ENCODE measurements at regions of chr7 and their contacts with region 1.

Region 1: DNA sequence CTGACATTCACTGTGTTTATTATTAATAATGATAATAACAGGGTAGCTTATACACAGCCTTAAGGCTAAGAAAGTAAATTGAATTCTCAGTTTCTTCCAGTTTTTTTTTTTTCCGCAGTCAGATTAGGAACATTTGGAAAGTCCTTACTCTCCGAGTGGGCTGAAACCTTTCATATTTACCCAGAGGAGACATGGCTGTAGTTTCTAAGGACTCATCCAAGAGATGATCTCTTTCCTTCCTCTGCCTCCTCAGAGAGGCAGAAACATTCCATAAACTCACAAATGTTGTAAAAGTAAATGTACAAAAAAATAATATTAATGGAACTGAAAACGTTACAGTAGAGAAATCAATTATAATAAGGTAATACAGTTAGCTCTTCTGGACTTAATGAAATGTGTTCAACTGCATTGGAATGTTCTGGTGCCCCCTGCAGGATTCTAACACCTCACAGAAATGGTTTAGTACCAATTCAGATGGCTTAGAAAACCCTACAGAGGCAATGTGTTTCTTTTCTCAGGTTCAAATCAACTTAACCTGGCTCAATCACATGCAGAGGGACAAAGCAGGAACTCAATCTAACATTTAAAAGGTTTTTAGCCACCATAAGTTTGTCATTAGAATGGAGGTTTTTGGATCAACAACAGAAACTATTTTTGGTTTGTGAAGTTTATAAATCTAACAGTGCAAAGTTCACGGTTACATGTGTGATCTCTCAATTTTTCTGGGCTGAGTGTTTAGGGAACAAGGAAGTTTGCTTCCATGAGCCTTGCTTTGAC is 71.7 kb downstream of the ICA1 start:
- DNase-seq: peak; percentile 79
- ATAC-seq: peak; percentile 88
- H3K4me3 Mint-ChIP-seq: no peak overlapping the region
- H3K27ac Mint-ChIP-seq: no peak overlapping the region
- H3K4me1 Mint-ChIP-seq: peaks cover 31% of the 10 kb centered on the region
- H3K27me3 Mint-ChIP-seq: peaks cover 14% of the 10 kb centered on the region

Region 2: DNA sequence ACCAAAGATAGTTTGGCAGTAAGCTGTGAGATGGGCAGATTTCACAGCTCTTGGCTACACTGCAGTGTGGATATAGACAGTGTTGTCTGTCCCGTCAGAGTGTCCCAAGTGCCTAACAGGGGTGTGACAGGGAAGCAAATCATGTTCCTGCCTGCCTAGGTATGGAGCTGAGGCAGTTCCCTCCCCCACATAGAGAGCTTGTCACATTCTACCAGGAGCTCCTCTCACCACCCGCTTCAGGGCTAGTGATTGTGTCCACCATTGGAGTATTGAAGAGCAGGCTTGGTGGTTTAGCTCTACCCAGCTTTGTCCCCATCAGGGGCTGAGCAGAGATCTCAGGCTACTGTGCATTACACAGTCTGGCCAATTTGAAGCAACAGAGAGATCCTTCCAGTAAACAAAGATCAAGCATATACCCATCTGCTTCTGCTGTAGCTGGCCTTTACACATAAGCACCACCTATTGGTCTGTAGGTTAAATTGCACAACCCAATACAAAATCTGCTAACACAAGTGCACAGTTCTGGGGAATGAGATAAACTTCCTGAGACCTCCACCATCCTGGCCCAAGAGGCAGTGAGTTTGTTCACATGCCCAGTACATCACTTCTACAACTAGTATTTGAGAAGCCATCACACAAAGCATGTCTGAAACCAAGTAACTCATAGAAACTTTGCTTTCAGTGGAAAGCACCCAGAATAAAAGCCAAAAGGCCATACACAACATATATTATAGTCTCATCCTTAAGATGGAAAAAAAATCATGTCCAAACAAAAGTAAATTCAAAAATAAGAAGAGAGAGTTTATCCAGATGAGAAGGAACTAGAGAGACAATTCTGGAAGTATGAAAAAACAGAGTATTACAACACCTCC is 154.4 kb before region 1 on chr7:
- CTCF ChIA-PET with region 1: interaction called, 11 read pairs
- POLR2A ChIA-PET with region 1: no interaction called
- DNase-seq: no peak
- ATAC-seq: peak; percentile 82
- H3K4me3 Mint-ChIP-seq: no peak overlapping the region
- H3K27ac Mint-ChIP-seq: no peak overlapping the region
- H3K4me1 Mint-ChIP-seq: peaks cover 6% of the 10 kb centered on the region
- H3K27me3 Mint-ChIP-seq: no peaks in the 10 kb centered on the region

Region 3: DNA sequence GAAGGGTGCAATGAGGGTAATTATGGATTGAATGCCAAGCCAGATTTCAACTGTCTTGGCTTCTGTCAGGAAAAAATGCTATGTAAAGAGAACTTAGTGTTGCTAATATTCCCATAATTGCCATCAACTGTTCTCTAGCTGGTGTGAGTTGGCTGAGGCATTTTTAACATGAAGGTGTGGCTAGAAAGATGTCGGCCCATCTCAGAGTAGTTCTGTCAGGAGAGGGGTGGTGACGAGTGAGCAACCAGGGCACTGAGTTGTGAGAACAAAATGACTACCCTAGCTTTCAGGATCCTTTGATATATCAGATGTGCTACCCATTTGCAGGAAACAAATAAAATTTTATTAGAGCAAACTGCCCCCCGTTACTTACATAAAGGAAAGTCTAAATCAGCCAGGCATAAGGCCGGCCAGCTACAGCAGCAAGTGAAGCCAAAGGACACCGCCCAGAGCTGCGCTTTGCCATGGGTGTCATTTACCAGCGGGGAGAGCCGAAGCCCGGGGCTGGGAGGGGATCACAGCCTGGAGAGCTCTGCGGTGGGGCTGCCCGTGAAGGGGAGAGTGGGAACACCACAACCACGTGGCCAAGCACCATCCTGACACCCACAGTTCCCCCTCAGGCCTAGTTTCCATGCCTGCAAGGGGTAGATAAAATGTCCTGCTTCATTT is 69.8 kb before region 1 on chr7:
- CTCF ChIA-PET with region 1: interaction called, 20 read pairs
- POLR2A ChIA-PET with region 1: interaction called, 8 read pairs
- DNase-seq: no peak
- ATAC-seq: no peak
- H3K4me3 Mint-ChIP-seq: no peak overlapping the region
- H3K27ac Mint-ChIP-seq: no peak overlapping the region
- H3K4me1 Mint-ChIP-seq: peaks cover 63% of the 10 kb centered on the region
- H3K27me3 Mint-ChIP-seq: peaks cover 2% of the 10 kb centered on the region

Region 4: DNA sequence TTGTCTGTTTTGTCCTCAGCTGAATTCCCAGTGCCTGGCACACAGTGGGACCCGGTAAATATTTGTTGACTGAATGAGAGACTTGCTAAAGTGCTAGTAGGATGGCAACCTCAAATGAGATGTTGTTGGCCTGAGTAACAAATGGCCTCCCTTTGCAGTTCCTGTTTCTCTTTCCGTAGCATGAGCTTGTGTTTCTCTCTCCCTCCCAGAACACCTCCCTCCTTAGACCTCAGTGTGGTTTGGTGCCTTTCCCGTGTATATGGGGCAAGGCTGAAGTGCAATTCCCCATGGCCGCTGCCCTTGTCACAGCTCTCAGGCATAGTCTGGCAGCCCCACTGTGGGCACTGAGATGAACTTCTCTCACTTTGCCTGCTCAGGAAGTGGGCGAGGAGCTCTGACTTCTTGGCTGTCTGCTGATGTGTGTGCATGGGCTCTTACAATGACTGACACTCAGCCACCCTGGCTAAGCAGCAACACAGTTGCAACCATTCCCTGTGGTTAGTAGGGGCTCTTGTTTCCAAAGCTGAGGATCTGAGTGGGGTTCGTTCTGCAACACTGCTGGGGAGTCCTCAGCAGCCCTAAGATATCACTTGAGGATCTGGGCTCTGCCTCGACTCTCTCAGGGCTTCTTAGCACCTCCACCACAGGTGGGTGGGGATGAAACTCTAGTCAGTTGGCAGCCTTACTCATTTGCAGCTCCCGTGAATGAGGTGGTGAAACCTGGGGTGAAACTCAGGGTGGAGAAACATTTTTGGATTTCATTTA is 64.4 kb before region 1 on chr7:
- CTCF ChIA-PET with region 1: interaction called, 20 read pairs
- POLR2A ChIA-PET with region 1: interaction called, 8 read pairs
- DNase-seq: peak; percentile 85
- ATAC-seq: peak; percentile 96
- H3K4me3 Mint-ChIP-seq: peak overlapping the region; percentile 57
- H3K27ac Mint-ChIP-seq: peak overlapping the region; percentile 99
- H3K4me1 Mint-ChIP-seq: peaks cover 76% of the 10 kb centered on the region
- H3K27me3 Mint-ChIP-seq: peaks cover 2% of the 10 kb centered on the region

Region 5: DNA sequence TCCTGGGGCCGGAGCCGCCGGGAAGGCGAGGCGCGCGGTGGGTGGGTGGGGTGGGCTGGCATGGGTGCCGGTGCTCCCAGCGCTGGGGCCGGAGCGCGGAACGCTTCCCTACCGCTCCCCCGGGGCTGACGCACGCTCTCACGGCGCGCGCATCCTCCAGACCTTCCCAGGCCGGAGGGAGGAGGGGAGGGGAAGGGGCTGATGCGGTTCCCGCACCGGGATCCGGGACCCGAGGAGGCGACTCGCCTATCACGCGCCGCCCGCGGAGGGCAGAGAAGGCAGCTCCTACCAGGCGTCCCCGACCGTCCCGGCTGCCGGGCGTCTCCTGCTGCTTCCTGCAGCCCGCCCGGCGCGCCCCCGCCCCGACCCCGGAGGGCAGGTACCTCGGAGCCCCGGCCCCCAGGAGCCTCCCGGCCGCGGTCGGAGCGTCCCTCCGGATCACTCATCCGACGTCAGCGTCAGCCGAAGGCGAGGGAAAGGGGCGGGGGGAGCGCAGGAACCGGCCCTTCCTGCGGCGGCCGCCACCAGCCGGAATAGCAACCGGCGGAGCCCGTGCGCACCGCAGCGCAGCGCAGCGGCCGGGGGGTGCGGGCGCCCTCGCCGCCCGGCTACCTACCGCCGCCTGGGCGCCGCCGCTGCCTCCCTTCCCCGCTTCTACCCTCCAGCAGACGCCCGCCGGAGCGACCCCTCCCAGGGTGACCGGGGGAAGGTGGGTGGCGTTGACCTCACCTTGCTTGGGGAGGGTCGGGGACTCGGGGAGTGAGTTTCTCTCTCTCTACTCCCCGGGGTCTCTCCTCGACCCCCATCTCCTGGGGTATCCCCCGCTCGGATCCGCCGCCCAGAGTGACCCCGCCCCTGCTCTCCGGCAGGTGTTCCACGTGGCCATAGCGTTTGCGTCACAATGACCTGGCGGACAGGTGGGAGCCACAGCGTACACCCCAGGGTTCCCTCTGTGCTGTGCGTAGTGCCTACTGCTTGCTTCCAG is 71.7 kb after region 1 on chr7 and contains the start of gene ICA1:
- CTCF ChIA-PET with region 1: no interaction called
- POLR2A ChIA-PET with region 1: no interaction called
- DNase-seq: peak; percentile 26
- ATAC-seq: peak; percentile 77
- H3K4me3 Mint-ChIP-seq: peak within 1 kb of the TSS; percentile 70
- H3K27ac Mint-ChIP-seq: no peak within 1 kb of the TSS
- H3K4me1 Mint-ChIP-seq: peaks cover 6% of the 10 kb centered on the region
- H3K27me3 Mint-ChIP-seq: peaks cover 50% of the 10 kb centered on the region
- total RNA-seq, gene ICA1: 0.76 to 1.8 TPM

Measured in activated CD8-positive, alpha-beta T cell treated with anti-CD3 and anti-CD28 coated beads, Interleukin-2, amount 10 ng/mL, durations not matched to agents 7 days and 5 days (primary cell).